ENCODE measurements at regions of chr19 and their contacts with region 1.

Region 1: GRCh38 chr19:4342615-4343369 is 570 bp upstream of the MPND start:
- DNase-seq: peak; percentile 98
- ATAC-seq: peak; percentile 89
- H3K4me3 ChIP-seq: peak overlapping the region; percentile 81
- H3K27ac ChIP-seq: peak overlapping the region; percentile 59
- H3K4me1 ChIP-seq: peaks cover 5% of the 10 kb centered on the region; the same call in 1 of the 2 replicates
- H3K27me3 ChIP-seq: no peaks in the 10 kb centered on the region
- CTCF ChIP-seq: no peak

Region 2: GRCh38 chr19:4246767-4247593 is 95.8 kb before region 1 on chr19 and contains the start of gene YJU2:
- CTCF ChIA-PET with region 1: interaction called, 3 read pairs
- POLR2A ChIA-PET with region 1: interaction called, 3 read pairs
- intact Hi-C with region 1: loop called (anchors 10 kb)
- DNase-seq: peak; percentile 98
- ATAC-seq: peak; percentile 97
- H3K4me3 ChIP-seq: peak within 1 kb of the TSS; percentile 78
- H3K27ac ChIP-seq: peak within 1 kb of the TSS; percentile 84
- H3K4me1 ChIP-seq: no peaks in the 10 kb centered on the region
- H3K27me3 ChIP-seq: no peaks in the 10 kb centered on the region
- CTCF ChIP-seq: peak; percentile 68
- total RNA-seq, gene YJU2: 33.1 and 45.6 TPM in 2 replicates

Region 3: GRCh38 chr19:4267101-4267900 is 75.5 kb before region 1 on chr19:
- CTCF ChIA-PET with region 1: interaction called, 10 read pairs
- POLR2A ChIA-PET with region 1: no interaction called
- intact Hi-C with region 1: no loop called
- DNase-seq: peak; percentile 64
- ATAC-seq: peak; percentile 74
- H3K4me3 ChIP-seq: no peak overlapping the region
- H3K27ac ChIP-seq: no peak overlapping the region
- H3K4me1 ChIP-seq: no peaks in the 10 kb centered on the region
- H3K27me3 ChIP-seq: no peaks in the 10 kb centered on the region
- CTCF ChIP-seq: peak; percentile 65

Region 4: DNA sequence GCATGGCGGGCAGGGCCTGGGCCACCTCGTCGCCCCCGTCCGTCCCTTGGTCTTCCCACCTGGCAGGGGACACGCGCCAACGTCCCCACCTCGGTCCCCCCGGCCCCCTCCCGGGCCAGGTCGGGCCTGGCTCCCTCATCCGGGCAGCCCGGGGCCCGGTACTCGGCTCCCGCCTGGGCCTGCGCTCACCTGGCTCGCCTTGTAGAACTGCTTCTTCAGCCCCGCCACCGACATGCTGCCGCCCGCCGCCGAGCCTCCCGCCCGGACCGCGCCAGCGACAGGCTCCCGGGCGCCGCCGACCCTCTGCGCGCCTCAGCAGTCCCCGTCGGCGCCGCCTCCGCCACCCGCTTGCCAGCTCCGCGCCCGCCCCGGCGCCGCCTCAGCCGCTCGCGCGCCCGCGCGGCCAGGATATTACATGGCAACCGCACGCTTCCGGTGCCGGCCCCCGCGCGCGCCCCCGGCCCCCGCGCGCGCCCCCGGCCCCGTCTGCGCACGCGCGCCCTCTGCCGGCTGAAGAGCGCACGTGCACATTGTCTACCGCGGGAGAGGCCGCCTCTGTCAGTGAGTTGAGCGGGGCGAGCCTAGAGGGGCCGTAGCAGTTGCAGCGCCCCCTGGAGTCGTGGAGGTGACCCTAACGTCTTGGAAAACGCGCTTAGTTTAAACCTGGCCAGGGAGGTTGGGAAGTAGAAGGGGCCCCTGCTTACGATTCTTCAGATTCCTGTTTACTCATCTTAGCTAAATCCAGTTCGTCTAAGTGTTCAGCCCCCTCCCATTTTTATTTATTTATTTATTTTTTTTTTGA is 57.5 kb after region 1 on chr19 and contains the start of gene SH3GL1:
- CTCF ChIA-PET with region 1: interaction called, 8 read pairs
- POLR2A ChIA-PET with region 1: no interaction called
- intact Hi-C with region 1: loop called (anchors 1 kb)
- DNase-seq: peak; percentile 80
- ATAC-seq: peak; percentile 57
- H3K4me3 ChIP-seq: peak within 1 kb of the TSS; percentile 97
- H3K27ac ChIP-seq: no peak within 1 kb of the TSS
- H3K4me1 ChIP-seq: peaks cover 24% of the 10 kb centered on the region
- H3K27me3 ChIP-seq: no peaks in the 10 kb centered on the region
- CTCF ChIP-seq: peak; percentile 74
- total RNA-seq, gene SH3GL1: 59.8 and 71.1 TPM in 2 replicates

Region 5: DNA sequence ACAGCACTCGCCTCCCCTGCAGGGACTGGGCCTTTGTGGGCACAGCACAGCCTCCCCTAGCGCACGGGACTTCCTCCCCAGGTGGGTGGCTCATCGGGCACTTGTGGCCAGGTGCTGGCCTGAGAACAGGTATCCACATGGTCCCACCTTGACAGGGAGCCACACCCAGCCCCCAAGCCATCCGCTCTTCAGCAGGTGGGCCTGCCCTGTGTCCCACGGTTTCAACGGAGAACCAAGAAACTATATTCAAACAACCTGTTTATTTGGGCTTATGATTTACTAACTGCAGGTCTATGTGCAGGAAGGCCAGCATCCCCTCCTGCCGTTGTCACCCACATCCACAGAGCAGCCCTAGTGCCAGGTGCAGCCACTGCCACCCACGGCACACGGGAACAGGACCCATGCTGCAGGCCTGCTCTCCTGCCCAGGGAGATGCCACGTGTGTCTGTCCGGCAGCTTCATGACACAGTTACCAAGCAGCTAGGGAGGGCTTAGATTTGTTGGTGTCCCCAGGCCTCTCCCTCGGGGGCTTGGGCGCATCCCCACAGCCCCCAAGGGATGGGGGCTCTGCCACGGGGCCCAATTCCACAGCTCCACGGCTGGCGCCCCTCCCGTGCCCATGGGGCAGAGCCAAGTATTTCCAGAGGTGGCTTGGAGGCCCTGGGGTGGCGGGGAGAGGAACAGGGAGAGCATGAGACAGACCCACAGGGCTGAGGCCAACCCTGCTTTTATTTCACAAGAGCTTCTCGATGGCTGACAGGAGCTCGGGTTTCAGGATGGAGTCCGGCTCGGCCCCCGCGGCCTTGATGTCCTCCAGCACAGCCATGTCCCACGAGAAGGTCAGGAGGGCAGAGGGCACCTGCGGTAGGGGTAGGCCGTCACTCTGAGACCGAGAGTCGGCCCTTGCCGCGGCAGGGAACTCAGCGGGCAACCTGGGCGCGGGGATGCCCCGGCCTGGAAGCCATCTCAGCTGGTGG is 102.3 kb after region 1 on chr19:
- CTCF ChIA-PET with region 1: no interaction called
- POLR2A ChIA-PET with region 1: no interaction called
- intact Hi-C with region 1: no loop called
- DNase-seq: no peak
- ATAC-seq: no peak; the same call in 1 of the 2 replicates
- H3K4me3 ChIP-seq: no peak overlapping the region
- H3K27ac ChIP-seq: no peak overlapping the region
- H3K4me1 ChIP-seq: no peaks in the 10 kb centered on the region
- H3K27me3 ChIP-seq: no peaks in the 10 kb centered on the region
- CTCF ChIP-seq: no peak